ENCODE measurements at regions of chr2 and their contacts with region 1.

Region 1: GRCh38 chr2:158903711-158904443 is 64.6 kb upstream of the TANC1 start:
- DNase-seq: no peak
- ATAC-seq: no peak
- H3K4me3 ChIP-seq: no peak overlapping the region
- H3K27ac ChIP-seq: no peak overlapping the region
- H3K4me1 ChIP-seq: no peaks in the 10 kb centered on the region
- H3K27me3 ChIP-seq: no peaks in the 10 kb centered on the region; a peak in 1 of 4 replicates
- CTCF ChIP-seq: no peak
- EP300 ChIP-seq: no peak
- POLR2A ChIP-seq: no peak
- RAD21 ChIP-seq: no peak

Region 2: GRCh38 chr2:159010340-159010739 is 106.5 kb after region 1 on chr2:
- CTCF ChIA-PET with region 1: no interaction called
- POLR2A ChIA-PET with region 1: no interaction called
- RAD21 ChIA-PET with region 1: no interaction called
- SMC1A ChIA-PET with region 1: no interaction called
- in situ Hi-C with region 1: no loop called
- intact Hi-C with region 1: no loop called
- DNase-seq: no peak
- ATAC-seq: no peak
- H3K4me3 ChIP-seq: no peak overlapping the region
- H3K27ac ChIP-seq: no peak overlapping the region
- H3K4me1 ChIP-seq: no peaks in the 10 kb centered on the region
- H3K27me3 ChIP-seq: no peaks in the 10 kb centered on the region
- CTCF ChIP-seq: no peak
- EP300 ChIP-seq: no peak
- POLR2A ChIP-seq: no peak
- RAD21 ChIP-seq: no peak

Region 3: GRCh38 chr2:159807183-159808031 is 903.5 kb after region 1 on chr2:
- CTCF ChIA-PET with region 1: interaction called, 3 read pairs
- POLR2A ChIA-PET with region 1: no interaction called
- RAD21 ChIA-PET with region 1: no interaction called
- SMC1A ChIA-PET with region 1: no interaction called
- in situ Hi-C with region 1: no loop called
- intact Hi-C with region 1: loop called (anchors 10 kb)
- DNase-seq: no peak
- ATAC-seq: peak; percentile 64
- H3K4me3 ChIP-seq: no peak overlapping the region
- H3K27ac ChIP-seq: no peak overlapping the region
- H3K4me1 ChIP-seq: no peaks in the 10 kb centered on the region
- H3K27me3 ChIP-seq: no peaks in the 10 kb centered on the region
- CTCF ChIP-seq: peak; percentile 48 to 54 (median 53)
- EP300 ChIP-seq: no peak
- POLR2A ChIP-seq: no peak
- RAD21 ChIP-seq: peak; percentile 69

Region 4: GRCh38 chr2:159982270-159982669 is 1078.4 kb after region 1 on chr2:
- CTCF ChIA-PET with region 1: interaction called, 3 read pairs
- POLR2A ChIA-PET with region 1: no interaction called
- RAD21 ChIA-PET with region 1: no interaction called
- SMC1A ChIA-PET with region 1: no interaction called
- in situ Hi-C with region 1: loop called (anchors 10 kb)
- intact Hi-C with region 1: no loop called
- DNase-seq: no peak
- ATAC-seq: no peak
- H3K4me3 ChIP-seq: no peak overlapping the region
- H3K27ac ChIP-seq: no peak overlapping the region
- H3K4me1 ChIP-seq: no peaks in the 10 kb centered on the region
- H3K27me3 ChIP-seq: no peaks in the 10 kb centered on the region; a peak in 1 of 4 replicates
- CTCF ChIP-seq: no peak
- EP300 ChIP-seq: no peak
- POLR2A ChIP-seq: no peak
- RAD21 ChIP-seq: no peak